CD4-positive, alpha-beta memory T cell (primary cell): ENCODE measurements at regions of chr17 and their contacts with region 1.

Region 1: GRCh38 chr17:48413613-48414405 is 16.2 kb downstream of the SKAP1 start:
- DNase-seq: peak in 2 of 5 donors; percentile 19 to 29
- H3K4me3 ChIP-seq: no peak overlapping the region
- H3K4me3 Mint-ChIP-seq: peak overlapping the region; percentile 63 to 85 (median 74)
- H3K27ac ChIP-seq: peak overlapping the region; percentile 48
- H3K27ac Mint-ChIP-seq: peak overlapping the region; percentile 80 to 96 (median 91)
- H3K4me1 ChIP-seq: peaks cover 95% of the 10 kb centered on the region
- H3K4me1 Mint-ChIP-seq: peaks cover 63 to 88% (median 78%) of the 10 kb centered on the region in 4 donors
- H3K27me3 ChIP-seq: no peaks in the 10 kb centered on the region
- H3K27me3 Mint-ChIP-seq: no peaks in the 10 kb centered on the region

Region 2: GRCh38 chr17:48374650-48375230 is 39.1 kb before region 1 on chr17:
- CTCF ChIA-PET with region 1: interaction called, 3 read pairs
- POLR2A ChIA-PET with region 1: interaction called, 5 read pairs
- intact Hi-C with region 1: loop called (anchors 5 kb)
- DNase-seq: peak; percentile 3 to 38 (median 21)
- H3K4me3 ChIP-seq: no peak overlapping the region
- H3K4me3 Mint-ChIP-seq: no peak overlapping the region
- H3K27ac ChIP-seq: no peak overlapping the region
- H3K27ac Mint-ChIP-seq: peak overlapping the region in 2 of 7 donors; percentile 9 to 20
- H3K4me1 ChIP-seq: peaks cover 23% of the 10 kb centered on the region
- H3K4me1 Mint-ChIP-seq: peaks cover 24 to 41% (median 33%) of the 10 kb centered on the region in 4 donors
- H3K27me3 ChIP-seq: no peaks in the 10 kb centered on the region
- H3K27me3 Mint-ChIP-seq: no peaks in the 10 kb centered on the region

Region 3: DNA sequence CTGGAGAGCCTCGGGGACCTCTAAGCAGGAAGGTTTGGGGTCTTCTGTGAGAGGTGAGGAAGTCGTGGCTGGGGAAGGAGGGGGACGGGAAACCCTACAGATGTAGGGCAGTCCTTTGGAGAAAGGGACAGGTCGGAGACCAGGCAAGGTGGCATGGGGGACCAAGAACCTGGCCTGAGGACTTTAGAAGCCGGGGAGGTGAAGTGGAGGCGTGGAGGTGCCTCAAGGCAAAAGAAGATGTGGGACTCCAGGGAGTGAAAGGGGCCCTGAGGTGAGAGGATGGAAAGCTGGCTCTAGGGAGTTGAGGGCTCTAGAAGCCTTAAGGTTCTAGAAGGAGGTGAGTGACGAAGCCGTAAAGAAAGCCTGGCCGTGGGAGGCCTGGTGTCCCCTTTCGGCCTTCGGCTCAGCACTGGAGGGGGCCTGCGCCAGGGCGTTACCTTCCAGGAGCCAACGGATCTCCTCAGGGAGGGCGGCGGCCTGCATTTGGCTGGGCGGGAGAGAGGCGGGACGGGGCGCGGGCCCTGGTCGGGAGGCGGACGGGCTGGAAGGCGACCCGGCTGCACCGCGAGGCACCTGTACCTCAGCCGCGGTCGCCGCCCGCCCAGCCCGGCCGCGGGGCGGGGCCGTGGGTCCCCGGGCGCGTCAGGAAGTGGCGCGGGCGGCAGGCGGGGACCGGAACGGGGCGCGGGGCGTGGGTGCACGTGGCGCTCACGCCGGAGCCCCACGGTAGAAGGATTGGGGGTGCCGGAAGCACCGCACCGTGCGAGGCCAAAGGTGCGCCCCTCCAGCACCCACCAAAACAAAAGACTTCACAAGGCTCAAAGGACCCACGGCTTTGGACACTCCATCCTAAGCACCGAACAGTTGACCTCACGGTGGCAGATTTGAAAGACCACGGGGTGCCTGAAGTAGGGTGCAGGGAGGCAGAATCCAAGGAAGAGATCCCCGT is 16.1 kb after region 1 on chr17 and contains the start of gene SKAP1:
- CTCF ChIA-PET with region 1: interaction called, 4 read pairs
- POLR2A ChIA-PET with region 1: interaction called, 24 read pairs
- intact Hi-C with region 1: loop called (anchors 1 kb)
- DNase-seq: peak; percentile 68 to 76 (median 71)
- H3K4me3 ChIP-seq: peak within 1 kb of the TSS; percentile 90 to 97
- H3K4me3 Mint-ChIP-seq: peak within 1 kb of the TSS; percentile 91 to 99 (median 97)
- H3K27ac ChIP-seq: peak within 1 kb of the TSS; percentile 89
- H3K27ac Mint-ChIP-seq: peak within 1 kb of the TSS; percentile 95 to 99 (median 97)
- H3K4me1 ChIP-seq: peaks cover 69% of the 10 kb centered on the region
- H3K4me1 Mint-ChIP-seq: peaks cover 62 to 97% (median 77%) of the 10 kb centered on the region in 4 donors
- H3K27me3 ChIP-seq: no peaks in the 10 kb centered on the region
- H3K27me3 Mint-ChIP-seq: no peaks in the 10 kb centered on the region
- total RNA-seq, gene SKAP1: 83.4 to 88.7 TPM

Region 4: GRCh38 chr17:48478224-48479013 is 64.6 kb after region 1 on chr17:
- CTCF ChIA-PET with region 1: no interaction called
- POLR2A ChIA-PET with region 1: no interaction called
- intact Hi-C with region 1: no loop called
- DNase-seq: peak in 1 of 5 donors; percentile 45
- H3K4me3 ChIP-seq: no peak overlapping the region
- H3K4me3 Mint-ChIP-seq: no peak overlapping the region
- H3K27ac ChIP-seq: no peak overlapping the region
- H3K27ac Mint-ChIP-seq: peak overlapping the region in 1 of 7 donors; percentile 72
- H3K4me1 ChIP-seq: peaks cover 5% of the 10 kb centered on the region
- H3K4me1 Mint-ChIP-seq: peaks cover 4 to 16% (median 9%) of the 10 kb centered on the region in 4 donors
- H3K27me3 ChIP-seq: no peaks in the 10 kb centered on the region
- H3K27me3 Mint-ChIP-seq: peaks cover 0 to 1% of the 10 kb centered on the region in 2 donors